Activated naive CD4-positive, alpha-beta T cell treated with anti-CD3 and anti-CD28 coated beads, Interleukin-2, amount 10 ng/mL, durations not matched to agents 7 days and 5 days (primary cell): ENCODE measurements at regions of chr6 and their contacts with region 1.

Region 1: GRCh38 chr6:166989427-166990032 is 9.7 kb upstream of the CEP43 start:
- DNase-seq: peak; percentile 60
- H3K4me3 Mint-ChIP-seq: no peak overlapping the region
- H3K27ac Mint-ChIP-seq: no peak overlapping the region
- H3K4me1 Mint-ChIP-seq: peaks cover 38% of the 10 kb centered on the region
- H3K27me3 Mint-ChIP-seq: no peaks in the 10 kb centered on the region

Region 2: GRCh38 chr6:166775180-166776081 is 214.1 kb before region 1 on chr6:
- CTCF ChIA-PET with region 1: interaction called, 36 read pairs
- DNase-seq: peak; percentile 71
- H3K4me3 Mint-ChIP-seq: no peak overlapping the region
- H3K27ac Mint-ChIP-seq: no peak overlapping the region
- H3K4me1 Mint-ChIP-seq: peaks cover 4% of the 10 kb centered on the region
- H3K27me3 Mint-ChIP-seq: peaks cover 30% of the 10 kb centered on the region

Region 3: GRCh38 chr6:166786704-166787293 is 202.7 kb before region 1 on chr6:
- CTCF ChIA-PET with region 1: interaction called, 45 read pairs
- DNase-seq: no peak
- H3K4me3 Mint-ChIP-seq: no peak overlapping the region
- H3K27ac Mint-ChIP-seq: no peak overlapping the region
- H3K4me1 Mint-ChIP-seq: no peaks in the 10 kb centered on the region
- H3K27me3 Mint-ChIP-seq: no peaks in the 10 kb centered on the region

Region 4: DNA sequence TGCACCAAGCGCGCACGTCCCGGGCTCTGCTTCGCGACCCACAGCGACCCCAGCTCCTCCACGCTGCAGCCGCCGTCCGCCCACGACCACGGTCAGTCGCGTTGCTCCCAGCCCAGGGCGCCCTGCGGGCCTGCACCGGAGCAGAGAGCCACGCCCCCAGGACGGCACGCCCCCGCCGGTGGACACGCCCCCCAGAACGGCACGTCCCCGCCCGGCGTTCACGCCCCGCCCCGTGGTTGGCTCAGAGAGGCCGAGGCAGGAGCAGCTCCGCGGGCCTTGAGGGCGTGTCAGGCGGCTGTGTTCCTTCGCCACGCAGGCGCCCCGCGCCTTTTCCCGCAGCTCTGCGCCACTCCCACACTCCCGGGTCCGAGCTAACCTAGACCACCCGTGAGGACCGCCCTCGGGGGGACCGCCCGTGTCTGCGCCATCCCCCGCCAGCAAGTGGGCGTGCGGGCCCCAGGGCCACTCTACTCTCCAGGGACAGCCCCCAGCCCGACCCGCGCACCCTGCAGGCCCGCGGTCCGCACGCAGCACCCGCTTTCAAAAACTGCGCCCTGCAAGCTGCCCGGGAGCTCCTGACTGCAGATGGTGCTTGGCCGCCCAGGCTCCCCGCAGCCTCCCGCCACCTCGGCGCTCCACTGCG is 33.0 kb before region 1 on chr6 and contains the start of gene RNASET2:
- CTCF ChIA-PET with region 1: interaction called, 53 read pairs
- DNase-seq: peak; percentile 99
- H3K4me3 Mint-ChIP-seq: peak within 1 kb of the TSS; percentile 86
- H3K27ac Mint-ChIP-seq: peak within 1 kb of the TSS; percentile 99
- H3K4me1 Mint-ChIP-seq: peaks cover 79% of the 10 kb centered on the region
- H3K27me3 Mint-ChIP-seq: peaks cover 6% of the 10 kb centered on the region

Region 5: GRCh38 chr6:167141667-167142432 is 152.3 kb after region 1 on chr6:
- CTCF ChIA-PET with region 1: interaction called, 16 read pairs
- DNase-seq: peak; percentile 57
- H3K4me3 Mint-ChIP-seq: no peak overlapping the region
- H3K27ac Mint-ChIP-seq: no peak overlapping the region
- H3K4me1 Mint-ChIP-seq: peaks cover 3% of the 10 kb centered on the region
- H3K27me3 Mint-ChIP-seq: peaks cover 32% of the 10 kb centered on the region